ENCODE measurements at regions of chr14 and their contacts with region 1.

Region 1: DNA sequence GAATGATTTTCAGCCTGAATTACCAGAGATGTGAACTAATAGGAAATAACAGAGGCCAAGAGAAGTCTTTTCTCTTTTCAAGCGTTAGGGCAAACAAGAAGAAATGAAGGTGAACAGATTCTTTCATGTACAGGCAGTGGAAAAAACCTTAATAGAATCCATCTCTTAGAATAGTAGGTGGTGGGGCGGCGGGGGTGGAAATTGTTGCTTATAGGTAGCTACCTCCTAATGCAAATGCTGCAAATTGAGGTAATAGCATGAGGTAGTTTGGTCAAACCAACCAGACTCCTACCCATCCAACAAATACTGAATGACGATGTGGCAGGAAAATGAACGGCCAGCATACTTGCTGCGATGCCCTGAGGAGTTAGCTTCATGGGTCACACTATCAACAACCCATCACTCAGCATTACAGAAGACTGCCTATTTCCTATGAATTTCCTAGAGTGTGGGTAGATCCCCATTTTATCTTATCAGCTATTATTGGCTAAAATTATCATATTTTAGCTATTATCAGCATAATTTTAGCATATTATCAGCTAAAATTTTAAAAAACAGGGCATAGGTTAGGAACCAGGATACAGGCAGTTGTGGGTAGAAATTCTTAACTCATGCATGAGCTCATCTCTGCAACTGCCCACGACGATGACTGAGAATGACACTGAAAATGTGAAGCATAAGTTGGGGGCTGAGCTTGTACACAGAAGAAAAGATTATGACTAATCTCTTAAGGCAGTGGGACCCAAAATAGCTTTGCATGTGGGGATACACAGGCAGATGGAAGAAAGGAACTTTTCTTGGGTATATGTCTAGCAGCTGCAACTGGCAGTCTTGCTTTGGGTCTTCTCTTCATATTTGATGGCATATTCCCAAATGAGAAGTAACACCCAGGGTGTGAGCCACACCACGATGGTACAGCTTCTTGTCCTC is 68.7 kb downstream of the NIN start:
- DNase-seq: no peak
- H3K4me3 ChIP-seq: no peak overlapping the region
- H3K27ac ChIP-seq: no peak overlapping the region
- H3K4me1 ChIP-seq: no peaks in the 10 kb centered on the region
- CTCF ChIP-seq: no peak

Region 2: DNA sequence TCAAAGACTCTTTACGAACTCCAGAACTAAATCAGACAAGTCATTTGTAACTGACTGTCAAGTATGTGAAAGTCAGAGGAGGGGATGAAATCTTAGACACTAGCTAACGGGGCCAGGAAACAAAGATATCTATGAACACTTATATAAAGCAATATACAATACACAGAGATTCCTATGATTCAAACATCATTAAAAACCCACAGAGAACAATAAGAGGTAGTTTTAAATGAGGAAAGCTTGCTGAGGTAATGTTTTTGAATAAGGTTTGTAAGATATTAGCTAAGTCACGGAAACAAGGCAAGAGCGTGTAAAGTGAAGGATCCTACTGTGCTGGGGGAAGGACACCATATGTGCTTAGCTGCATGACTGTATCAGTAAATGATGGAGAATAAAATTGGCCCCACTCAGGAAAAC is 130.9 kb before region 1 on chr14:
- CTCF ChIA-PET with region 1: no interaction called
- POLR2A ChIA-PET with region 1: no interaction called
- intact Hi-C with region 1: no loop called
- DNase-seq: no peak
- H3K4me3 ChIP-seq: no peak overlapping the region
- H3K27ac ChIP-seq: no peak overlapping the region
- H3K4me1 ChIP-seq: no peaks in the 10 kb centered on the region
- CTCF ChIP-seq: no peak

Region 3: GRCh38 chr14:50773632-50774541 is 11.6 kb after region 1 on chr14:
- CTCF ChIA-PET with region 1: interaction called, 4 read pairs
- POLR2A ChIA-PET with region 1: interaction called, 24 read pairs
- intact Hi-C with region 1: no loop called
- DNase-seq: peak; percentile 30
- H3K4me3 ChIP-seq: no peak overlapping the region
- H3K27ac ChIP-seq: no peak overlapping the region
- H3K4me1 ChIP-seq: peaks cover 14% of the 10 kb centered on the region
- CTCF ChIP-seq: peak; percentile 82

Region 4: GRCh38 chr14:50778721-50779483 is 16.6 kb after region 1 on chr14:
- CTCF ChIA-PET with region 1: interaction called, 4 read pairs
- POLR2A ChIA-PET with region 1: interaction called, 24 read pairs
- intact Hi-C with region 1: no loop called
- DNase-seq: no peak
- H3K4me3 ChIP-seq: no peak overlapping the region
- H3K27ac ChIP-seq: peak overlapping the region; percentile 52
- H3K4me1 ChIP-seq: peaks cover 28% of the 10 kb centered on the region
- CTCF ChIP-seq: no peak

Region 5: DNA sequence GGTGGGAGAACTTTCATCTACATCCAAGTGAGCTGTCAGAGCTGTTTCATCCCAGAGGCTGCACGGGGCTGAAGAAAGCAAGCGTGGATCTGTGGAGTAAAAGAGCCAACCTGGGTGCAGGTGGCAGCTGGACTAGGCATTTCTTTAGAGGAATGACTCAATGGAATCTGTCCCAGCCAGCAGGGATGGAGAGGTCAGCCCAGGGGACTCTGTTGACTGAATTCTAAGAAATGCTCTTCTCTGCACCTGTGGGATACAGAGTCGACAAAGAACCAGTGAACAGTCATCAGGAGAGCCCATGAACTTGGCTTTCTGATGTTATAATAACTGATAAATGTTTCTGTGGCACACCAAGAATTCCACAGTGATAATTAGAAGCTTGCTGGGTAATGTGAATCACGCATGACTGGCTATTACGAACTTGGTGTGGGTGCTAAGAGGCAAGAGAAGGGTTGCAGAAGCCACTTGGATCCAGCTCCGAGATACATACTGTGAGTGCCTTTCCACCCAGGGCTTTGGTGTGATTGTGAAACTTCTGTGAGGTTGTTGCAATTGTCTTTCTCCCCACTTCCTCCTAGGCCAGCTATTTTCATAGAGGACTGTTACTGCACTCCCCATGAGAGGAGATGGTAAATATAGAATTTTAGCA is 165.8 kb after region 1 on chr14:
- CTCF ChIA-PET with region 1: no interaction called
- POLR2A ChIA-PET with region 1: interaction called, 12 read pairs
- intact Hi-C with region 1: no loop called
- DNase-seq: no peak
- H3K4me3 ChIP-seq: no peak overlapping the region
- H3K27ac ChIP-seq: no peak overlapping the region
- H3K4me1 ChIP-seq: no peaks in the 10 kb centered on the region
- CTCF ChIP-seq: no peak

Measured in OCI-LY7 (cell line).